ENCODE measurements at regions of chr4 and their contacts with region 1.

Region 1: DNA sequence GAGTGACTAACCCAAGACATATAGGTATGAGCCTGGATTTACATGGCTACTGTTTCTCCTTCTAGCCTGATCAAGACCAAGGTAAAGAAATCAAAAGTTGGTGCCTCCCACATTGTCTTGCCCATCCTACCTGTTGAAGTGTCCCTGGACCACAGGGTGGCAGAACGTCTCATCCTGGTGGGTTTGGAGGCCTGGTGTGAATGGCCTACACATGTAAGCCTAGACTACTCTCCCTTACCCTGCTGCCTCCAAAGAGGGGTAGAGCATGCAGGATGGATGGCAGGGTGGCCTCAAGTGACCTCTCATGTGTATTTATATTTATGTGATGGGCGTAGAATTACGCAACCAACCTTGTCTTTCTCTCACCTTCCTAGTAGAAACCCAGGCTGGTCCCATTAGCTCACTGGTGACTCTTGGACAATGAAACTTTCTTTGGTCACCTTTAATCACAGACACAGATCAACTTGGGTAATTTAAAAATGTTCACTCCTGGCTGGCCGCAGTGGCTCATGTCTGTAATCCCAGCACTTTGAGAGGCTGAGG is 73.3 kb upstream of the SOD3 start:
- DNase-seq: no peak
- ATAC-seq: no peak
- H3K4me3 ChIP-seq: no peak overlapping the region
- H3K27ac ChIP-seq: no peak overlapping the region
- H3K4me1 ChIP-seq: no peaks in the 10 kb centered on the region
- H3K27me3 ChIP-seq: no peaks in the 10 kb centered on the region
- CTCF ChIP-seq: no peak
- EP300 ChIP-seq: no peak
- POLR2A ChIP-seq: no peak
- RAD21 ChIP-seq: no peak

Region 2: GRCh38 chr4:24664956-24665355 is 57.1 kb before region 1 on chr4:
- CTCF ChIA-PET with region 1: no interaction called
- POLR2A ChIA-PET with region 1: no interaction called
- RAD21 ChIA-PET with region 1: no interaction called
- SMC1A ChIA-PET with region 1: no interaction called
- in situ Hi-C with region 1: loop called (anchors 10 kb)
- intact Hi-C with region 1: no loop called
- DNase-seq: no peak
- ATAC-seq: no peak
- H3K4me3 ChIP-seq: no peak overlapping the region
- H3K27ac ChIP-seq: no peak overlapping the region
- H3K4me1 ChIP-seq: no peaks in the 10 kb centered on the region
- H3K27me3 ChIP-seq: peaks cover 0 to 4% of the 10 kb centered on the region in 2 experiments; a peak in 1 of 4 replicates
- CTCF ChIP-seq: no peak
- EP300 ChIP-seq: no peak
- POLR2A ChIP-seq: no peak
- RAD21 ChIP-seq: no peak

Region 3: GRCh38 chr4:25500626-25501316 is 778.7 kb after region 1 on chr4:
- CTCF ChIA-PET with region 1: no interaction called
- POLR2A ChIA-PET with region 1: no interaction called
- RAD21 ChIA-PET with region 1: no interaction called
- SMC1A ChIA-PET with region 1: no interaction called
- in situ Hi-C with region 1: no loop called
- intact Hi-C with region 1: no loop called
- DNase-seq: no peak
- ATAC-seq: no peak
- H3K4me3 ChIP-seq: no peak overlapping the region
- H3K27ac ChIP-seq: no peak overlapping the region
- H3K4me1 ChIP-seq: no peaks in the 10 kb centered on the region
- H3K27me3 ChIP-seq: no peaks in the 10 kb centered on the region
- CTCF ChIP-seq: no peak
- EP300 ChIP-seq: no peak
- POLR2A ChIP-seq: no peak
- RAD21 ChIP-seq: no peak

Measured in GM12878 (cell line).